ENCODE measurements at regions of chr12 and their contacts with region 1.

Region 1: GRCh38 chr12:94149119-94149780 is 873 bp downstream of the PLXNC1 start:
- DNase-seq: peak; percentile 87
- ATAC-seq: peak; percentile 36
- H3K4me3 ChIP-seq: peak overlapping the region; percentile 30 to 80 (median 74)
- H3K4me3 Mint-ChIP-seq: peak overlapping the region; percentile 99
- H3K27ac ChIP-seq: peak overlapping the region in 1 of 2 donors; percentile 26
- H3K27ac Mint-ChIP-seq: peak overlapping the region; percentile 84
- H3K4me1 ChIP-seq: peaks cover 25 to 43% of the 10 kb centered on the region in 2 donors
- H3K4me1 Mint-ChIP-seq: peaks cover 63% of the 10 kb centered on the region
- H3K27me3 ChIP-seq: no peaks in the 10 kb centered on the region
- H3K27me3 Mint-ChIP-seq: no peaks in the 10 kb centered on the region
- CTCF ChIP-seq: peak; percentile 67

Region 2: GRCh38 chr12:93663006-93663728 is 486.1 kb before region 1 on chr12:
- CTCF ChIA-PET with region 1: no interaction called
- POLR2A ChIA-PET with region 1: no interaction called
- intact Hi-C with region 1: no loop called
- DNase-seq: no peak
- ATAC-seq: no peak
- H3K4me3 ChIP-seq: no peak overlapping the region
- H3K4me3 Mint-ChIP-seq: no peak overlapping the region
- H3K27ac ChIP-seq: no peak overlapping the region
- H3K27ac Mint-ChIP-seq: no peak overlapping the region
- H3K4me1 ChIP-seq: no peaks in the 10 kb centered on the region
- H3K4me1 Mint-ChIP-seq: no peaks in the 10 kb centered on the region
- H3K27me3 ChIP-seq: no peaks in the 10 kb centered on the region
- H3K27me3 Mint-ChIP-seq: peaks cover 7% of the 10 kb centered on the region
- CTCF ChIP-seq: no peak

Region 3: DNA sequence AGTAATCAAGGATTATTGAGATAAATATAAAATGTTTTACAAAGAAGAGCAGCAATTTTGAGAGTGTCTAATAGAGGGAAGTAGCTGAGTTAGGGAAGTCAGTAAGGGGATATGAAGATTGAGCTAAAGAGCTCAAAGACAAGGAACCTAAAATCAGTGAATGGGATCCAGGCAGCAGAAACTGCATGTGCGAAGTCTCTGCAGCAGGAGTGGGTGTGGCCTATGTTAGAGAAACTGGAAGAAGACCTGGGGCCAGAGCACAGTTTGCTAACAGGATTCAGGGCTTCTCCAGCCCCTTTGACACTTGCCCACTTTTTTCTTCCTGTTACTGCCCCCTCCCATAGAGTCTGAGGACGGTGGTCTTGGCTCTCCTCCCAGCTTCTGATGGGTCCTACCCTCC is 37.1 kb before region 1 on chr12:
- CTCF ChIA-PET with region 1: no interaction called
- POLR2A ChIA-PET with region 1: no interaction called
- intact Hi-C with region 1: no loop called
- DNase-seq: no peak
- ATAC-seq: no peak
- H3K4me3 ChIP-seq: no peak overlapping the region
- H3K4me3 Mint-ChIP-seq: no peak overlapping the region
- H3K27ac ChIP-seq: no peak overlapping the region
- H3K27ac Mint-ChIP-seq: no peak overlapping the region
- H3K4me1 ChIP-seq: no peaks in the 10 kb centered on the region
- H3K4me1 Mint-ChIP-seq: no peaks in the 10 kb centered on the region
- H3K27me3 ChIP-seq: no peaks in the 10 kb centered on the region
- H3K27me3 Mint-ChIP-seq: peaks cover 9% of the 10 kb centered on the region
- CTCF ChIP-seq: no peak

Region 4: DNA sequence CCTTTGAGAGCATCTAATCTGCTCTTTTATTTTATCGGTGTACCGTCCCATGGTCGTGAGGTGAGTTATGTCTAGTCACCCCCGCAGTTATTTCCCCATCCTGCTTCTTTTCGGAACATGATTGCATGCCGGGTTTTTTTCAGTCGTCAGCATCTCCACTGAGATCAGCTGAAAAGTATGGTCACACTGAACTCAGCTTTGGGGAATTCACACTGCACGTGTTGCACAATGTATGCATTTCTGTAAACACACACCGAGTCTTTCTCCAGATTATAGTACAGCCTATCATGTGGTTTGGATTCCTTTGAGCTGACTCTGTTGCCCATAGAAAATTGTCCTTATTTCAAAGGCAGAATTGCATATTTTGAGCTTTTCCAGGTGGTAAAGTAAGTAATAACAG is 23.7 kb after region 1 on chr12:
- CTCF ChIA-PET with region 1: interaction called, 7 read pairs
- POLR2A ChIA-PET with region 1: no interaction called
- intact Hi-C with region 1: loop called (anchors 2 kb)
- DNase-seq: peak; percentile 54
- ATAC-seq: no peak
- H3K4me3 ChIP-seq: peak overlapping the region in 1 of 5 experiments; percentile 57
- H3K4me3 Mint-ChIP-seq: peak overlapping the region; percentile 68
- H3K27ac ChIP-seq: peak overlapping the region; percentile 5 to 7
- H3K27ac Mint-ChIP-seq: peak overlapping the region; percentile 54
- H3K4me1 ChIP-seq: peaks cover 37 to 43% of the 10 kb centered on the region in 2 donors
- H3K4me1 Mint-ChIP-seq: peaks cover 53% of the 10 kb centered on the region
- H3K27me3 ChIP-seq: no peaks in the 10 kb centered on the region
- H3K27me3 Mint-ChIP-seq: no peaks in the 10 kb centered on the region
- CTCF ChIP-seq: no peak

Region 5: DNA sequence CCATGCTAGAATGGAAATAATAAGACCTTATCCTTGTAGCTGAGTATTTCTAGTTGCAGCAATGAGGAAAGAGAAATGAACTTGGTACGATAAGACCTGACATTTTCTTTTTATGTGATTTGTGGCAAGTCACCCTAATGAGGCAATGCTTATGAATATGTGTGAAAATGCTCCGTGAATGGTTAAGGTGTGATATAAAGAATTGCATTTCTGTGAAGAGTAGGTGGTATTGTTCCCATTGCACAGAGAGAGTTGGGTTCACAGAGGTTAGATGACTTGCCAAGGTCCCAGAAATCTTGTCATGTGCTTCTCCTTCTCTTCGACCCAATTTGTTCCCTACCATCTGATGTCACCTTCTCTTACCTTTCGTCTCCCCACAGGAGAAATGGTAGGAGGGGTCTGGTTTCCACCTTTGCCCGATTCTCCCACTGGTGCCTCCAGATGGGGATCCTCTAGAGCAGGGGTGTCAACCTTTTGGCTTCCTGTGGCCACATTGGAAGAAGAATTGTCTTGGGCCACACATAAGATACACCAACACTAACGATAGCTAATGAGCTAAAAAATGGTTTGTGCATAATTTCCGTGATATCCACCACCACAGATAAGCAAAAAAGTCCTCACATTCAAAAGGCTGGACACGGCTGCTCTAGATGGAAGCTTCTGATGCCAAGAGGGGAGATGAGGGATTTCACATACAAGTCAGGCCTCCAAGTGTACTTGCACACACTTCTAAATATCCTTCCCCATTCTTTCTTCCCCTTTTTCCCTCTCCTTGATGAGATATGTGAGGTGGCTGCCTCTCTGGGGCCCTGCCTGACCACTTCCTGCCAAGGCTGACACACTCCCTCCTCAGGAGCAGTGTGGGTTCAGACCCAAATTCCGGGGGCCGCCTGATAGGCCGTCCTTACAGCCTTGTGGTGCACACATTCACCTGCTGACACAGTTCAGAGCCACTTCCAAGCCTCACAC is 95.2 kb after region 1 on chr12:
- CTCF ChIA-PET with region 1: interaction called, 4 read pairs
- POLR2A ChIA-PET with region 1: interaction called, 4 read pairs
- intact Hi-C with region 1: loop called (anchors 1 kb)
- DNase-seq: peak; percentile 57
- ATAC-seq: peak; percentile 32
- H3K4me3 ChIP-seq: peak overlapping the region in 1 of 5 experiments; percentile 25
- H3K4me3 Mint-ChIP-seq: peak overlapping the region; percentile 71
- H3K27ac ChIP-seq: peak overlapping the region; percentile 22 to 39
- H3K27ac Mint-ChIP-seq: peak overlapping the region; percentile 83
- H3K4me1 ChIP-seq: peaks cover 52 to 58% of the 10 kb centered on the region in 2 donors
- H3K4me1 Mint-ChIP-seq: peaks cover 59% of the 10 kb centered on the region
- H3K27me3 ChIP-seq: no peaks in the 10 kb centered on the region
- H3K27me3 Mint-ChIP-seq: no peaks in the 10 kb centered on the region
- CTCF ChIP-seq: no peak

Region 6: GRCh38 chr12:94318181-94318580 is 168.9 kb after region 1 on chr12:
- CTCF ChIA-PET with region 1: interaction called, 3 read pairs
- POLR2A ChIA-PET with region 1: no interaction called
- intact Hi-C with region 1: loop called (anchors 5 kb)
- DNase-seq: peak; percentile 74
- ATAC-seq: peak; percentile 97
- H3K4me3 ChIP-seq: no peak overlapping the region
- H3K4me3 Mint-ChIP-seq: peak overlapping the region; percentile 12
- H3K27ac ChIP-seq: peak overlapping the region in 1 of 2 donors; percentile 33
- H3K27ac Mint-ChIP-seq: peak overlapping the region; percentile 60
- H3K4me1 ChIP-seq: peaks cover 16 to 18% of the 10 kb centered on the region in 2 donors
- H3K4me1 Mint-ChIP-seq: peaks cover 28% of the 10 kb centered on the region
- H3K27me3 ChIP-seq: no peaks in the 10 kb centered on the region
- H3K27me3 Mint-ChIP-seq: no peaks in the 10 kb centered on the region
- CTCF ChIP-seq: no peak

Region 7: DNA sequence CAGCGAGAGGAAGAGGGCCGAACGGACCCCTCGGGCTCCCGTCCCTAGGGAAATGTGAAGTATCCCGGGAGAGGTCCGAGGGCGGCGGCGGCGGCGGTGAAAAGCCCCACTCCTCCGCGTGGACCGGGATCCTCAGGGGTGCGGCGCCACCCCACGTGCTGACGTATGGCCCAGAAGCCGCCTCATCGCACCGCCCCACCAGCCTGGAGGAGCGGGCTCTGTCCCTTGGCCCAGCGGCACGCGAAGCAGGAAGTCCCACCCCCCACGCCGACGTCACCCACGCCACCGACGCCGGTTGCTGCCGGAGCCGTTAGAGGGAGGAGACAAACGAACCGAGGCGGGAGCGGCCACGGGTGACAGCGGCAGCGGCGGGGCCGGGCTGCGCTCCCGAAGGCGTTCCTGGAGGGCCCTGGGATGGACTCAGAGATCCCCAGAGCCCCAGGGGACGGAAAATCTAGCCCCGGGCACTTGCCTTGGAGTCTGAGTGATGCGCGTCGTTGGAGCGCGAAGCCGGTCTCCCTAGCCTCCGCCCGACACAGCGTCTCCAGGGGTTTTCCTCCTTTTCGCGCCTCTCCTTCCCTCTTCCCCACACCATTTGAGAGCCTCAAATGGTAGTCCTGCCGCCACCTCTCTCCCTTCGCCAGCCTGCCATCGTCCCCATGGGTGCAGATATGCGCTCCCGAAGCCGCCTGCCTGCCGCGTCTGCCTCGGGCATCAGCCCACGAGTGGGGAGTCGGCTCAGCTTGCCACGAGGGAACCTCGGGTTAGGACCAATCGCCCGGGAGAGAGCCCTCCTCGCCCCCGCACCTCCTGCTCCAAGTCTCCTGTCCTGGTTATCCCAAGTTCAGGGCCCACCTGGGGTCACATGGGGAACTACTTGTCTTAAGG is 310.7 kb after region 1 on chr12 and contains the start of gene CEP83:
- CTCF ChIA-PET with region 1: interaction called, 4 read pairs
- POLR2A ChIA-PET with region 1: no interaction called
- intact Hi-C with region 1: loop called (anchors 1 kb)
- DNase-seq: peak; percentile 97
- ATAC-seq: peak; percentile 96
- H3K4me3 ChIP-seq: peak within 1 kb of the TSS; percentile 77 to 95 (median 88)
- H3K4me3 Mint-ChIP-seq: peak within 1 kb of the TSS; percentile 97
- H3K27ac ChIP-seq: peak within 1 kb of the TSS; percentile 92 to 96
- H3K27ac Mint-ChIP-seq: peak within 1 kb of the TSS; percentile 94
- H3K4me1 ChIP-seq: peaks cover 11 to 19% of the 10 kb centered on the region in 2 donors
- H3K4me1 Mint-ChIP-seq: peaks cover 23% of the 10 kb centered on the region
- H3K27me3 ChIP-seq: no peaks in the 10 kb centered on the region
- H3K27me3 Mint-ChIP-seq: no peaks in the 10 kb centered on the region
- CTCF ChIP-seq: no peak
- total RNA-seq, gene CEP83: 24.8 and 27.2 TPM in 2 replicates

Region 8: DNA sequence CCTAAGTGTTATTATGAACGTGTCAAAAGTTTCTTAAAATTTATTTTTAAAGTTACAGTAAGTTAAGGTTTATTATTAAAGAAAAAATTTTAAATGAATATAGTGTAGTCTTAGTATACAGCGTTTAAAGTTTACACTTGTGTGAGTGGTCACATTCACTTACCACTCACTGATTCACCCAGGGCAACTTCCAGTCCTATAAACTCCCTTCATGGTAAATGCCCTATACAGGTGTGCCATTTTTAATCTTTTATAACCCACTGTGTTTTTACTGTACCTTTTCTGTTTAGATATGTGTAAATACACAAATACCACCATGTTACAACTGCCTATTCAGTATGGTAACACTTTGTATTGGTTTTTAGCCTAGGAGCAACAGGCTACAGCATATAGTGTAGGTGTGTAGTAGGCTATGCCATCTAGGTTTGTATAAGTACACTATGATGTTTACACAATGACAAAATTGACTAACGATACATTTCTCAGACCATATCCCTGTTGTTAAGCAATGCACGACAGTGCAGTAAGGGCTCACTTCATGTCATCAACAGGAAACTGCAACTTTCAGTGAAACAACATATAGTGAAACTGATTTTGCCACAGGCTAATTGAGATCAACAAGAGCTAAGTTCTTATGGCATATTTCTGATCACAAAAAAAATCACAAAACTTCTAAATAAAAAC is 613.2 kb after region 1 on chr12:
- CTCF ChIA-PET with region 1: interaction called, 3 read pairs
- POLR2A ChIA-PET with region 1: no interaction called
- intact Hi-C with region 1: loop called (anchors 10 kb)
- DNase-seq: no peak
- ATAC-seq: peak; percentile 23
- H3K4me3 ChIP-seq: peak overlapping the region in 1 of 5 experiments; percentile 13
- H3K4me3 Mint-ChIP-seq: peak overlapping the region; percentile 51
- H3K27ac ChIP-seq: no peak overlapping the region
- H3K27ac Mint-ChIP-seq: no peak overlapping the region
- H3K4me1 ChIP-seq: peaks cover 34 to 39% of the 10 kb centered on the region in 2 donors
- H3K4me1 Mint-ChIP-seq: peaks cover 43% of the 10 kb centered on the region
- H3K27me3 ChIP-seq: no peaks in the 10 kb centered on the region
- H3K27me3 Mint-ChIP-seq: no peaks in the 10 kb centered on the region
- CTCF ChIP-seq: no peak